ENCODE measurements at regions of chrX and their contacts with region 1.

Region 1: DNA sequence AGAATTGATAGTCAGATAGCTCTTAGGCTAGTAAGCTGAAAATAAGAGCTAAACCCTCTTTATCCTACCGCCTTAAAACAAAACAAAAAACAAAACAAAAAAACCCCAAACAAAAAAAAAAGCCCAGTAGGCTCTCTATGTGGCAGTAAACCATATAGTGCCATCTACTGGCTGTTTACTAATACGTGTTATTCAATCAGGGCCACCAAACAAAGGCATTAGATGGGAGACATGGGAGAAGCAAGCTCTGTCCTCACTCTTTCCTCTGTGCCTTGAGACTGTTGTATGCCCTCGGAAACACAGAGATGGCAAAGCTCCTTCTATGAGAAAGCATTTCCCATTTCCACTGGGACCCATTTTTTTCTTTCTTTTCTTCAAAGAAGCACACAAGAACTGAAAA is 148.8 kb upstream of the MID1 start:
- DNase-seq: peak; percentile 61
- ATAC-seq: peak; percentile 78
- H3K4me3 ChIP-seq: no peak overlapping the region
- H3K27ac ChIP-seq: no peak overlapping the region
- H3K4me1 ChIP-seq: no peaks in the 10 kb centered on the region
- H3K27me3 ChIP-seq: no peaks in the 10 kb centered on the region
- CTCF ChIP-seq: peak; percentile 70

Region 2: GRCh38 chrX:10702031-10702430 is 67.2 kb before region 1 on chrX:
- CTCF ChIA-PET with region 1: no interaction called
- POLR2A ChIA-PET with region 1: no interaction called
- intact Hi-C with region 1: no loop called
- DNase-seq: no peak
- ATAC-seq: no peak
- H3K4me3 ChIP-seq: no peak overlapping the region
- H3K27ac ChIP-seq: no peak overlapping the region
- H3K4me1 ChIP-seq: no peaks in the 10 kb centered on the region
- H3K27me3 ChIP-seq: no peaks in the 10 kb centered on the region
- CTCF ChIP-seq: no peak

Region 3: DNA sequence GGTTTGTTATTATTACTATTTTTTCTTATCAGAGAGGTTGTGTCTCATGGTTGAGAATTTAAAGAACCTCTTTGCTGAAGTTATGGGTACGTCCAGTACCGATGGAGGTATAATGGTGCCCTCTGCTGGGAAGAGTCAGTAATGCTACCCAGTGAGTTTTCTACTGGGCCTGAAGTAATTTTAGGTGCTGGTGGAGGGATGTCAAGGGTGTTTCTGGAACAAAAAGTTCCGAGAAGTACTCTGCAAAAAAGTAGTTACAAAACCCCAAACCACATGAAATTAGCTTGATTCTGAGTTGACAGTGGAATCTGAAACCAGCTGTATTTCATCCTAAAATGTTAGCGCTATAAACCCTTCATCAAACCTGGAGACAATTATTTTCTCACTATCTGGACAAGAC is 46.3 kb before region 1 on chrX:
- CTCF ChIA-PET with region 1: interaction called, 3 read pairs
- POLR2A ChIA-PET with region 1: interaction called, 7 read pairs
- intact Hi-C with region 1: loop called (anchors 5 kb)
- DNase-seq: peak; percentile 78
- ATAC-seq: peak; percentile 64
- H3K4me3 ChIP-seq: no peak overlapping the region
- H3K27ac ChIP-seq: no peak overlapping the region
- H3K4me1 ChIP-seq: no peaks in the 10 kb centered on the region
- H3K27me3 ChIP-seq: no peaks in the 10 kb centered on the region
- CTCF ChIP-seq: peak; percentile 78

Region 4: DNA sequence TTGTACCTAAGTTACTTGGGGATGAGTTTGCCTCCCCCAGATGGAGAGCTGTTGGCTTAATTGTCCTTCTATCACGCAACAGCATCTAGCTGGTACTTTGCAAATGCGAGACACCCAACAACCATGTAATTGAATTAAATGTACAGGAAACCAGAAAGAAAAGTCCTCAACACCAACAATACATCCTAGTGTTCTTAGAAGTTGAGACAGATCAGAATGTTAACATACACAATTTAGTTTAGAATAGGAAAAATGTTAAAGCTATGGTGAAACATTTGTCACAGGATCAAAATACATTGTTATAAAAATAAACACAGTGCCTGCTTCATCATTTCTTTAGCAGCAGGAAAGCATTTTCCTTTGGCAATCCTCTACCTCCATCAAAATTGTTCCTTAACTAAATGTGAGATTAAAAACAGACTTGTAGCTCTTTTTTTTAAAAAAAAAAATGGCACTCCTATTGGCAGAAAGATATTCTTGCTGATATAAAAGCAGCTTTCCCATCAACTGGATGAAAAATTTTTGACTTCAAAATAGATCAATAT is 14.3 kb after region 1 on chrX:
- CTCF ChIA-PET with region 1: no interaction called
- POLR2A ChIA-PET with region 1: no interaction called
- intact Hi-C with region 1: no loop called
- DNase-seq: no peak
- ATAC-seq: no peak
- H3K4me3 ChIP-seq: no peak overlapping the region
- H3K27ac ChIP-seq: no peak overlapping the region
- H3K4me1 ChIP-seq: peaks cover 7% of the 10 kb centered on the region; the same call in 1 of the 2 replicates
- H3K27me3 ChIP-seq: no peaks in the 10 kb centered on the region
- CTCF ChIP-seq: no peak